HAP-1 (cell line): ENCODE measurements at regions of chr11 and their contacts with region 1.

Region 1: GRCh38 chr11:123478352-123478987 is 48.4 kb downstream of the GRAMD1B start:
- DNase-seq: peak; percentile 75 to 87
- H3K4me3 ChIP-seq: no peak overlapping the region
- H3K4me1 ChIP-seq: peaks cover 7% of the 10 kb centered on the region
- H3K27me3 ChIP-seq: no peaks in the 10 kb centered on the region

Region 2: DNA sequence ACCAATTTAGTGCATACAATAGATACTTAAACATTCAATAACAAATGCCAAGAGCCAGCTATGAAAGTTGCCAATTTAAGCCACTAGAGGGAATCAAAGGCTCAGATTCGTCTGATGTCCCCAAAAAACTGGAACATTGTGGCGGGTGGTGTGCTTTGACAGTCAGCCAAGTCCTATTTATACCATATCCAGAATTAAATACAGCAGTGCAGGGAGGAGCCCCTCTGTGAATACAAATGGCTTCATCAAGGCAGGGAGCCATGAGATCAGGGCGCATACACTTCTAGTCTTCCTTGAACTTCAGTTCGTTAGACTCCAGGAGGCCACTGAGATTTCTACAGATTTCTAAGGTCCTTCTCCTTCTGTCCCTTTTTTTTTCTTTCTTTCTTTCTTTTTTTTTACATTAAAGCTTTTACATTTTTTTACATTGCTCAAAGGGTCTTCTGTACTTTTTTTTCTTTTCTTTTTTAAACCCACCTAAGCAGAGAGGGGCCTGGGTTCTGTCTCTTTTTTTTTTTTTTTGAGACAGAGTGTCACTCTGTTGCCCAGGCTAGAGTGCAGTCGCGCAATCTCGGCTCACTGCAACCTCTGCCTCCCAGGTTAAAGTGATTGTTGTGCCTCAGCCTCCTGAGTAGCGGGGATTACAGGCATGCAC is 375.0 kb before region 1 on chr11:
- in situ Hi-C with region 1: loop called (anchors 25 kb)
- DNase-seq: peak; percentile 62 to 66
- H3K4me3 ChIP-seq: no peak overlapping the region
- H3K4me1 ChIP-seq: no peaks in the 10 kb centered on the region
- H3K27me3 ChIP-seq: peaks cover 3% of the 10 kb centered on the region; the same call in 1 of the 2 replicates

Region 3: GRCh38 chr11:123268118-123268517 is 210.4 kb before region 1 on chr11:
- in situ Hi-C with region 1: no loop called
- DNase-seq: no peak
- H3K4me3 ChIP-seq: no peak overlapping the region
- H3K4me1 ChIP-seq: no peaks in the 10 kb centered on the region
- H3K27me3 ChIP-seq: peaks cover 3% of the 10 kb centered on the region; the same call in 1 of the 2 replicates

Region 4: DNA sequence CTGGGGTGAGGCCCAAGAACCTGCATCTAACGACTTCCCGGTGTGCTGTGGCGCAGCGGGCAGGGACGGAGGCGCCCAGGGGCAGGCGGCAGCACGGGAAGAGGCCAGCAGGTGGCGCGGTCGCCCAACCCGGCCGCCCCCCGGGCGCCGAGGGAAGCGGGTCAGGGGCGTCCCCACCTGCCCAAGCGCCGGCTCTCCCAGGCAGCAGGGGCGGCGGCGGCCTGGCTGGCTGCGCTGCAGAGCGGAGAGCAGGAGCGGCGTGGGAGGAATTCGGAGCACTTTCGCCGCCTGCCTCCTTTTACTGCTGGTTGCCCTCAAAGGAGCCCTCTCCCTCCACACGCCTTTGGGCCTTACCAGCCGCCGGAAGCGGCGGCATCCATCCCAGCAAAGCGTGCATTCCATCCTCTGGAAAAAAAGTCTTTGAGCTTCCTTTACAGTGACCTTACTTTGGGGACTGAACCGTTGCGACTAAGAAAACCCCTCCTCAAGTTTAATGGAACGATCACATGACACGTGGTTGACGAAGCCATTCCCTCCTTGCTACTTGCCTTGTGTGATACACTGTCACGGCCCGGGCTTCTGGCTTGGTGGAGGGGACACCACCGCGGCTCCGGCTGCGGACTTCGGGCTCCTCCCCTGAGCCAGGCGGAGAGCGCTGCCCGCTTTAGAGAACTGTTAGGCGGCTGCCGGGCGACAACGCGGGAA is 176.6 kb before region 1 on chr11:
- in situ Hi-C with region 1: loop called (anchors 5 kb)
- DNase-seq: peak; percentile 68 to 81
- H3K4me3 ChIP-seq: no peak overlapping the region
- H3K4me1 ChIP-seq: peaks cover 3% of the 10 kb centered on the region; the same call in 1 of the 2 replicates
- H3K27me3 ChIP-seq: no peaks in the 10 kb centered on the region

Region 5: GRCh38 chr11:123407130-123407995 is 71.1 kb before region 1 on chr11:
- in situ Hi-C with region 1: loop called (anchors 5 kb)
- DNase-seq: peak; percentile 76 to 84
- H3K4me3 ChIP-seq: no peak overlapping the region
- H3K4me1 ChIP-seq: peaks cover 4% of the 10 kb centered on the region
- H3K27me3 ChIP-seq: no peaks in the 10 kb centered on the region